ENCODE measurements at regions of chr1 and their contacts with region 1.

Region 1: DNA sequence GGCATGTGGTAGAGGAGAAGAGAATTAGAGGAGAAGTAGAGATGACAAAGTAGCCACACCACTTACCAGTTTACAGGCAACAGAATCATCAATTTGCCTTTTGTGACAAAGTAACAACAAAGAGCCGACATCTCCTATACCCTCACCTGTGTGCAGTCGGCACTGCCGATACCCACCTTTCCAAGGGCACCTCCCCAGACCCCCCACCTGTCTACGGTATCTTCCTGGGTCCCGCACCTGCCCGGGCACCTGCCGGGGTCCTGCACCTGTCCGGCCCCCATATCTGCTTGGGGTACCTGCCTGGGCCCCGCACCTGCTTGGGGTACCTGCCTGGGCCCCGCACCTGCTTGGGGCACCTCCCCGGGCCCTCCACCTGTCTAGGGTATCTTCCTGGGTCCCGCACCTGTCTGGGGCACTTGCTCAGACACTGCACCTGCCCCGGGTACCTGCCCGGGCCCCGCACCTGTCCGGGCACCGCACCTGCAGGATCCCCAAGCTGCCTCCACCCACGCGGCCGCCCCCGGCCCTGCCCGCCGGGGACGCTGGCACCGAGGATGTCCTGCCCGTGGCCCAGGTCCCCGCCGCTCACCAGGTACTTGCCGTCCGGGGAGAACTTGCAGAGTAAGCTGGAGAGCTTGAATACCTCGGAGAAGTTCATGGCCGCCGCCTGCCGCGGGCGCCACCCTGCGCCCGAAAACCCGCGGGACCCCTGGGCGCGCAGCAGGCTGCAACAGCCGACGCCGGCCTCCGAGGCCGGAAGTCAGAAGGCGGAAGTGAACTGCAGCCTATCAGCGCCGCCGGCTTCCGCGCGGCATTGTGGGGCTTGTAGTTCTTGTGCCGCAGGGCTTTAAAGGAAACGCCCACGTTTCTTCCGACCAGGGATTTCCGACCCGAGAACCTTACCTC is at the start of gene WRAP73:
- DNase-seq: peak; percentile 72
- H3K4me3 ChIP-seq: peak within 1 kb of the TSS; percentile 94
- CTCF ChIP-seq: peak; percentile 26

Region 2: GRCh38 chr1:3384407-3384806 is 265.2 kb before region 1 on chr1:
- in situ Hi-C with region 1: loop called (anchors 10 kb)
- DNase-seq: no peak
- H3K4me3 ChIP-seq: no peak overlapping the region
- CTCF ChIP-seq: no peak

Region 3: DNA sequence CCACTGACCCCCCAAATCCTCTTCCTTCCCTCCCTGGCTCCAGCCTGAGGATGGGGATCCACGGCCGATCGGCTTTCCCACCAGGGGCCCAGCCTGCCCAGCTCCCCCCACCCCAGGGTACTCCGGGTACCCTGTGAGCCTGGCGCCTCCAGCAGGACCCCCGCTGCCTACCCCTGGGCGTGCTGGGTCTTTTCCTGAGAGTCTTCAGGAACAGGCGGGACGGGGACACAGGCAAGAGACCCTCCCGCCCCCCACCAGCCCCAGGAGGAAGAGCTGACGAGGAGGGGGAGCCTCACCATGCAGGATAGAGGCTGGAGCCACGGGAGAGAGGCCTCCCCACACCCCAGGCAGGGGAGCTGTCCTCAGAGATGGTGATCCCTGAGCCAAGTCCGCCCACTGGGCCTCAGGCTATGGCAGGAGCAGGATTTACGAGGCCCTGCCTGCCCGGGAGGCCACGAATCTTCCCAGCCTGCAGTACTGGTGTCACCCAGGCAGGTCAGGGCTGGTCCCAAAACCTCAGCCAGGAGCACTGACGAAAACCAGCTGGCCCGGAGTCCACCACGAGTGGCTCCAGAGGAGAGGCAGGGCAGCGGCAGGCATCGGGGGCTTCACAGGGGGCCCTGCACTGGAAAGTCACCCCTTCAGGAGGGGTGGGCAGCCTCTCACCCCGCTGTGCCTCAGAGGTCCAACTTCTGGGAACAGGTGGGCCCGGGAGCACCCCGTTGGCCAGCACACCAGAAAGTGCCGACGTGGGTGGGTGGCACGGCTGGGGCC is 96.2 kb before region 1 on chr1:
- in situ Hi-C with region 1: loop called (anchors 5 kb)
- DNase-seq: no peak
- H3K4me3 ChIP-seq: no peak overlapping the region
- CTCF ChIP-seq: no peak

Region 4: DNA sequence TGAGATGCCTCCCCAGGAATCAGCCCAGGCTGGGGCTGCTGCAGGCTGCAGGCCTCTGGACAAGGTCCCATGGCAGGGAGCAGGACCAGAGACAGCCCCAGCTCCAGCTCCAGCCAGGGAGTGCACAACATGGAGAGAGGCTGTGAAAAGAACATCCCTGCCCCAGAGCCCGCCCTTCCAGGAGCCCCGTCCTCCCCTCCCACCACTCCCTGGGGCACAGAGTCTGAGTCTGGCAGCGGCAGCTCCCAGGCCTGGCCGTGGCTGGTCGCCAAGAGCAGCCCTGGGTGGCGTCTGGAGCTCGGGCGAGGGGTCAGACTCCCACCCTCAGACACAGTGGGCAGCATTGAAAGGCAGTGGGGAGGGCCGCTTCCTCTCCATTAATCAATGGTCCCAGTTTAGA is 76.1 kb before region 1 on chr1:
- in situ Hi-C with region 1: no loop called
- DNase-seq: no peak
- H3K4me3 ChIP-seq: no peak overlapping the region
- CTCF ChIP-seq: no peak

Region 5: DNA sequence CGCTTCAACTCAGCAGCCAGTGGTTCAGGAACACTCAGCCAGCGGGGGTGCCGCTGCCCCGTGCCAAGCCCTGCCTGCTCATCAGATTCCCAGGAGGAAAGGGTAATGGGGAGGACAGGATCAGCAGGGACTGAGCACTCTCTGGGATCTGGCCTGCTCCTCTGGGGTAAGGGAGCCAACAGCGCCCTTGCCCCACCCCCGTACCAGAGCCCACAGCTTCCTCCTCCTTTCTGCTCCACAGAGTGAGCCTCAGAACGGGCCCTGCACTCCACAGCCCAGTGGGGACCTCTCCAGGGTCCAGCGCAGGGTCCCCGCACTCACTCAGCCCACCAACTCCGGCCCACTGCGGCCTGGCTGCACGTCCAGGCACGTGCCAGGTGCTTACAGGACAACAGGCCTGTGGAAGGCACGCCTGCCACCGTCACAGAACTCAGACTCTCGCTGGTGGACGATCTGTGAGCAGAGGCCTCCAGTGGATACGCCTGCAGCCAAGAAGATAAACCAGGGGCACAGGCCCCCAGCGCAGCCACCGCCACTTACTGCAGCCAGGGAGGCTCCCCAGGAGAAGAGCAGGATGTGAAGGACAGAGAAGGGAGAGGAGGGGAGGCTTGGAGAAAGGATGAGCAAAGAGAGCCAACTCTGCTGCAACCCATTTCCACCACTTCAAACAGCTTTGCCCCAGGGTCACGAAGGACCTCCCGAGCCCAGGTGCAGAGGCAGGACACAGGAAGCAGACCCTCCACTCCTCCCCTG is 40.4 kb before region 1 on chr1:
- in situ Hi-C with region 1: no loop called
- DNase-seq: no peak
- H3K4me3 ChIP-seq: no peak overlapping the region
- CTCF ChIP-seq: no peak

Region 6: DNA sequence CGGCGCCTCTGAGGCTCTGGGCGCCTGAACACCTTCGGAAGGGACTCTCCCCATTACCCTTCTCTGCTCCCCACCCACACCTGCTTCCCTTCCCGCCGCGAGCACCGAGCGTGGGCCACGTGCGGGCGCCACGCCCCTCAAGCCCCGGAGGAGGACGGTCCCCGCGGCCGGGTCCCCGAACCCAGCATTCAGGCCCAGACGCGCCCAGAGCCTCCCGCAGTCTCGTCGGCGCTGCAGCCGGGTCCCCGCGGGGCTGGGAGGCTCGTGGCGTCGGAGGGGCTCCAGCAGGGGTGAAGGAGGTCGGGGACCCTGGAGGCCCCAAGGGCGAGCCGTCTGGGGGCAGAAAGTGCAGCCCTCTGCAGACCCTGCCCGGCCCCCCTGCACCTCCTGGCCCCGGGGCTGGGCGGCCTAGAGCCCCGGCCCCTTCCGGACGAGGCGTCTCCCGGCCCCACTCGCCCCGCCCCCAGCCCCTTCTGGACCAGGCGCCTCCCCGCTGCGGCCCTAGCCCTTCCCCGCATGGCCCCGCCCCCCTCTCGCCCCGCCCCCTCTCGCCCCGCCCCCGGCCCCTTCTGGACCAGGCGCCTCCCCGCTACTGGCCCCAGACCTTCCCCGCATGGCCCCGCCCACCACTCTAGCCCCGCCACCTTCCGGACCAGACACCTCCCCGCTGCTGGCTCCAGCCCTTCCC is 122.6 kb after region 1 on chr1:
- in situ Hi-C with region 1: loop called (anchors 5 kb)
- DNase-seq: peak; percentile 38
- H3K4me3 ChIP-seq: peak overlapping the region; percentile 52
- CTCF ChIP-seq: no peak

Region 7: GRCh38 chr1:3842912-3843311 is 193.3 kb after region 1 on chr1:
- in situ Hi-C with region 1: no loop called
- DNase-seq: no peak
- H3K4me3 ChIP-seq: no peak overlapping the region
- CTCF ChIP-seq: no peak

Region 8: GRCh38 chr1:4203501-4203900 is 553.9 kb after region 1 on chr1:
- in situ Hi-C with region 1: no loop called
- DNase-seq: no peak
- H3K4me3 ChIP-seq: no peak overlapping the region
- CTCF ChIP-seq: no peak

Measured in astrocyte of the cerebellum (primary cell).